Endothelial cell of umbilical vein (primary cell): ENCODE measurements at regions of chr14 and their contacts with region 1.

Region 1: GRCh38 chr14:51996148-51996746 is 6.9 kb downstream of the RTRAF start:
- DNase-seq: peak; percentile 66
- H3K4me3 ChIP-seq: no peak overlapping the region
- H3K27ac ChIP-seq: no peak overlapping the region
- H3K4me1 ChIP-seq: no peaks in the 10 kb centered on the region
- H3K27me3 ChIP-seq: no peaks in the 10 kb centered on the region
- CTCF ChIP-seq: peak; percentile 37 to 52
- POLR2A ChIP-seq: no peak

Region 2: GRCh38 chr14:51479584-51480325 is 516.5 kb before region 1 on chr14:
- CTCF ChIA-PET with region 1: no interaction called
- POLR2A ChIA-PET with region 1: no interaction called
- dilution Hi-C with region 1: no loop called
- intact Hi-C with region 1: no loop called
- DNase-seq: no peak
- H3K4me3 ChIP-seq: no peak overlapping the region
- H3K27ac ChIP-seq: no peak overlapping the region
- H3K4me1 ChIP-seq: no peaks in the 10 kb centered on the region
- H3K27me3 ChIP-seq: no peaks in the 10 kb centered on the region
- CTCF ChIP-seq: no peak
- POLR2A ChIP-seq: no peak

Region 3: DNA sequence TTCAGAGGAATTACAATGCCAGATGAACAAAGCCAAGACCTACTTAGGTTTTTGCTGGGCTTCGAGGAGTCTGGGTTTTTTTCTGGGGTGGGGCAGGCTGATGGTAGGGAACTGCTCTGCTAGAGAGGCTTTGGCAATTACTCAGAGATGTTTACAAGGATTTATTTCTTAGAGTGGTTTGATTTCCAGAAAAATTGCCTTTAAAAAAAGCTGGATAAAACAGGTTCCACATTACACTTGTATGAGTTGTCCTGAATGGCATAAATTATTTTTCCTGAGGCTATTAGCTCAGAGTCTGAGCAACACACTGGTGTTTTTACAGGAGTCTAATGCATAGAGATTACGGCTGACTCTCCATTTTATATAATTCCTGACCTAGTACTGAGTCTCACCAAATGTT is 463.1 kb before region 1 on chr14:
- CTCF ChIA-PET with region 1: no interaction called
- POLR2A ChIA-PET with region 1: no interaction called
- dilution Hi-C with region 1: no loop called
- intact Hi-C with region 1: no loop called
- DNase-seq: peak; percentile 25
- H3K4me3 ChIP-seq: no peak overlapping the region
- H3K27ac ChIP-seq: peak overlapping the region; percentile 19
- H3K4me1 ChIP-seq: peaks cover 29% of the 10 kb centered on the region
- H3K27me3 ChIP-seq: no peaks in the 10 kb centered on the region
- CTCF ChIP-seq: no peak
- POLR2A ChIP-seq: no peak

Region 4: DNA sequence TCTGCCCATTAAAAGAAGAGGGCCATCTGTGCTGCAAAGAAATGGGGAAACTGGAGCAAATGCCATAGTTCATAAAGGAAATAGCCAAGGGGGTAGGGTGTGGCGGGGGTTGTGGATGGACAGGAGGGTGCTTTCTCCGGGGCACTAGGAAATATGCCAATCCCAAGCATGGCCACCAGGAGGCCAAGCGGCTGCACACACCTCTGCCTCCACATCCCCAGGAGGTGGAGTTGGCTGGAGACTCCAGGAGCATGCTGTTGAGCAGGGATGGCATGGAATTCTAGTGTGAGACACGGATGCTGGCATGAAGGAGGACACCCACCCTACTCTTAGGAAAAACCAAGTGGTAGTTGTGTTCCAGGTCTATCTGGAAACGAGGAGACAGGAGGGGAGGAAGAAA is 47.4 kb after region 1 on chr14:
- CTCF ChIA-PET with region 1: interaction called, 4 read pairs
- POLR2A ChIA-PET with region 1: no interaction called
- dilution Hi-C with region 1: no loop called
- intact Hi-C with region 1: loop called (anchors 1 kb)
- DNase-seq: peak; percentile 37
- H3K4me3 ChIP-seq: no peak overlapping the region
- H3K27ac ChIP-seq: no peak overlapping the region
- H3K4me1 ChIP-seq: peaks cover 4% of the 10 kb centered on the region
- H3K27me3 ChIP-seq: peaks cover 0 to 2% of the 10 kb centered on the region in 2 experiments
- CTCF ChIP-seq: peak; percentile 54 to 76
- POLR2A ChIP-seq: no peak

Region 5: DNA sequence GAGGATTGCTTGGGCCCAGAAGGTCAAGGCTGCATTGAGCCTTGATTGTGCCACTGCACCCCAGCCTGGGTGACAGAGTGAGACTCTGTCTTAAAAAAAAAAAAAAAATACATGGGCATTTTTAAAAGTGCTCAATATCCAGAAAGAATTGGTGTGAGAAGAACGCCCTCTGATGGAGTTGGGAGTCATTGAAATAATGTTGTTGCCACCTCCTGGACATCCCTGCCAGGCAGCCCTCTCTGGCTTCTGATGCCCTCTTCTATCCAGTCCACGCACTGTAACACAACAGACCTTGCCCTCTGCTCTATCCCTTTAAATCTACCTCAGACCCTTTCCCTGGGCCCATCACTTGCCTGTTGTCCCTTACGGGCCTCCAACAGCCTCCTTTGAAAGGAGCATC is 276.1 kb after region 1 on chr14:
- CTCF ChIA-PET with region 1: interaction called, 8 read pairs
- POLR2A ChIA-PET with region 1: no interaction called
- dilution Hi-C with region 1: no loop called
- intact Hi-C with region 1: loop called (anchors 5 kb)
- DNase-seq: no peak
- H3K4me3 ChIP-seq: no peak overlapping the region
- H3K27ac ChIP-seq: no peak overlapping the region
- H3K4me1 ChIP-seq: no peaks in the 10 kb centered on the region
- H3K27me3 ChIP-seq: peaks cover 38 to 65% of the 10 kb centered on the region in 2 experiments
- CTCF ChIP-seq: peak in 1 of 2 donors; percentile 20
- POLR2A ChIP-seq: no peak